Spleen (tissue), 13 donors: ENCODE measurements at regions of chr15 and their contacts with region 1.

Region 1: GRCh38 chr15:63093486-63094205 is 28.0 kb upstream of the LACTB start:
- DNase-seq: peak; percentile 86
- H3K4me3 ChIP-seq: no peak overlapping the region
- H3K27ac ChIP-seq: no peak overlapping the region
- H3K4me1 ChIP-seq: peaks cover 0 to 12% (median 4%) of the 10 kb centered on the region in 6 donors
- H3K27me3 ChIP-seq: peaks cover 0 to 6% (median 0%) of the 10 kb centered on the region in 7 donors
- CTCF ChIP-seq: peak; percentile 34 to 87 (median 79)
- POLR2A ChIP-seq: no peak

Region 2: GRCh38 chr15:62782039-62782791 is 311.4 kb before region 1 on chr15:
- intact Hi-C with region 1: loop called (anchors 5 kb)
- DNase-seq: no peak
- H3K4me3 ChIP-seq: no peak overlapping the region
- H3K27ac ChIP-seq: peak overlapping the region in 4 of 8 donors; percentile 12 to 30 (median 24)
- H3K4me1 ChIP-seq: peaks cover 0 to 42% (median 13%) of the 10 kb centered on the region in 6 donors
- H3K27me3 ChIP-seq: no peaks in the 10 kb centered on the region
- CTCF ChIP-seq: peak in 9 of 11 experiments; percentile 19 to 68 (median 58)
- POLR2A ChIP-seq: no peak

Region 3: DNA sequence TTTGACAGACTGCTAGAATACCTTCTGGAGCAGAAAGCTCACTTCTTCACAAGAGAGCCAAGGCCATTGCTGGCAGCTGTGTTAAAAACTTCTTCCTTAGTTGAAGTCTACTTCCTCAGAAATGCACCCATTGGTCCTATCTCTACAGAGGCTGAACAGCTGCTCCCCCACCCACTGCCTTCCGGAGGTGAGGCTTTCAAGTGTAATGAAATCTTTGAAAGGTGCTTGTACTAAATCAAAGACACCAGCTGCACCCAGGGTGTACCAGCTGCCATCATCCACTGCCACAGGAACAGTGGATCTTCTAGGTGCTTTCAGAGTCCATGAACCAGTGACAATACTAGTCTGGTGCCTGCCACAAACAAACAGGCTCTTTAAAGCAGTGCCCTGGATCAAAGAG is 766.5 kb after region 1 on chr15:
- intact Hi-C with region 1: no loop called
- DNase-seq: peak; percentile 86
- H3K4me3 ChIP-seq: no peak overlapping the region
- H3K27ac ChIP-seq: peak overlapping the region in 7 of 8 donors; percentile 4 to 79 (median 57)
- H3K4me1 ChIP-seq: peaks cover 0 to 40% (median 21%) of the 10 kb centered on the region in 6 donors
- H3K27me3 ChIP-seq: no peaks in the 10 kb centered on the region
- CTCF ChIP-seq: no peak
- POLR2A ChIP-seq: no peak